ENCODE measurements at regions of chr18 and their contacts with region 1.

Region 1: GRCh38 chr18:23032030-23032582 is 99.0 kb downstream of the RBBP8 start:
- DNase-seq: peak; percentile 76
- H3K4me3 ChIP-seq: no peak overlapping the region
- H3K27ac ChIP-seq: peak overlapping the region; percentile 75
- H3K4me1 ChIP-seq: peaks cover 26% of the 10 kb centered on the region
- H3K27me3 ChIP-seq: no peaks in the 10 kb centered on the region
- CTCF ChIP-seq: no peak

Region 2: DNA sequence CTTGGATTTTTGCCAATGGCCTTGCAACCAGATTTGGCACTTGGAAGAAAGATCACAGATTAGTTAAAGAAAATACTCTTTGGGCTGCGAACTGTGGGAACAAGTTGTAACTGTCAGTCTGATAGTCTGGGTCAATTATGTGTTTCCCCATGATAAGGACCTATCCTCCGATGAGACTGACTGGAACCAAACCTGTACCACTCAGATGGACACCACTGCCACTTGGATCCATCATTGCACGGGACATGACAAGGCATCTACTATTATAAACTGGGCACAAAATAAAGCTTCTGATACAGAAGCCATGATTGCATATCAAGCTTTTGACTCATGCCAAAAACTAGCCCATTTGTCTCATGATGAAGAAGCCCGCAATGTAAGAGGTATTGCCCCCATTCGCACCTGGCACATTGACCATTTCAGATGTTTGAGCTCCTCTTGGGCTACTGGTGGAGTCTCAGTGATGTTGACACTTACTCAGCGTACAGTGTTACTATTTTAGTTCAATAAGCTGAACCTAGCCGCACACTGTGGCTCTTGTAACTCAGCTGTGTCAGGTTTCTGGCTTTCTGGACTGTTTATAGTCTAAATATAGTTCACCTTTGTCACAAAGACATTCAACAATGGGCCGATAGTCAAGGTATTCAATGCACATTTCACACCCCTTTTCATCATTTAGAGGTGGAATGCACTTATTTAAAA is 278.8 kb before region 1 on chr18:
- CTCF ChIA-PET with region 1: no interaction called
- dilution Hi-C with region 1: no loop called
- in situ Hi-C with region 1: no loop called
- intact Hi-C with region 1: no loop called
- DNase-seq: no peak
- H3K4me3 ChIP-seq: no peak overlapping the region
- H3K27ac ChIP-seq: no peak overlapping the region
- H3K4me1 ChIP-seq: no peaks in the 10 kb centered on the region
- H3K27me3 ChIP-seq: no peaks in the 10 kb centered on the region
- CTCF ChIP-seq: no peak

Region 3: DNA sequence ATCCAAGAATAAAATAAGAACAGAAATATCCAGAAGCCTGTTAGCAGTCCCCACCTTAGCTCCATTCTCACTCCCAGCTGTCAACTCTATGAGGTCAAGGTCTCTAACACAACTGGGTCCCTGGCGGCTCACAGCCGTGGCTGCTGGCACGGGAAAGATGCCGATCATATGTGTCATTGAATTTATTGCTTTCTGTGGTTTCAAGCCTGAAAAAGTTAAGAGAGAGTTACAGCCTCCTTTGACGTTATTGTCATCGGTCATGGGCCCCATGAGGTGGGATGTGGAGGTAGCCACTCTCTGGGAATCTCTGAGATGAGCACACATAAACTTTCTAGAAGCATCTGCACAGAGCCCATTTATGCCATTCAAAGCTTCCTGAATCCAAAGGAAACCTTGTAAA is 74.5 kb after region 1 on chr18:
- CTCF ChIA-PET with region 1: interaction called, 3 read pairs
- dilution Hi-C with region 1: no loop called
- in situ Hi-C with region 1: no loop called
- intact Hi-C with region 1: loop called (anchors 5 kb)
- DNase-seq: peak; percentile 96
- H3K4me3 ChIP-seq: no peak overlapping the region
- H3K27ac ChIP-seq: peak overlapping the region; percentile 95
- H3K4me1 ChIP-seq: peaks cover 33% of the 10 kb centered on the region
- H3K27me3 ChIP-seq: no peaks in the 10 kb centered on the region
- CTCF ChIP-seq: peak in 1 of 2 donors; percentile 28

Region 4: GRCh38 chr18:23122334-23123229 is 90.5 kb after region 1 on chr18:
- CTCF ChIA-PET with region 1: no interaction called
- dilution Hi-C with region 1: no loop called
- in situ Hi-C with region 1: no loop called
- intact Hi-C with region 1: no loop called
- DNase-seq: no peak
- H3K4me3 ChIP-seq: no peak overlapping the region
- H3K27ac ChIP-seq: no peak overlapping the region
- H3K4me1 ChIP-seq: no peaks in the 10 kb centered on the region
- H3K27me3 ChIP-seq: no peaks in the 10 kb centered on the region
- CTCF ChIP-seq: no peak

Region 5: GRCh38 chr18:23337599-23338444 is 305.7 kb after region 1 on chr18:
- CTCF ChIA-PET with region 1: no interaction called
- dilution Hi-C with region 1: no loop called
- in situ Hi-C with region 1: no loop called
- intact Hi-C with region 1: no loop called
- DNase-seq: peak; percentile 50
- H3K4me3 ChIP-seq: no peak overlapping the region
- H3K27ac ChIP-seq: no peak overlapping the region
- H3K4me1 ChIP-seq: no peaks in the 10 kb centered on the region
- H3K27me3 ChIP-seq: no peaks in the 10 kb centered on the region
- CTCF ChIP-seq: no peak

Region 6: DNA sequence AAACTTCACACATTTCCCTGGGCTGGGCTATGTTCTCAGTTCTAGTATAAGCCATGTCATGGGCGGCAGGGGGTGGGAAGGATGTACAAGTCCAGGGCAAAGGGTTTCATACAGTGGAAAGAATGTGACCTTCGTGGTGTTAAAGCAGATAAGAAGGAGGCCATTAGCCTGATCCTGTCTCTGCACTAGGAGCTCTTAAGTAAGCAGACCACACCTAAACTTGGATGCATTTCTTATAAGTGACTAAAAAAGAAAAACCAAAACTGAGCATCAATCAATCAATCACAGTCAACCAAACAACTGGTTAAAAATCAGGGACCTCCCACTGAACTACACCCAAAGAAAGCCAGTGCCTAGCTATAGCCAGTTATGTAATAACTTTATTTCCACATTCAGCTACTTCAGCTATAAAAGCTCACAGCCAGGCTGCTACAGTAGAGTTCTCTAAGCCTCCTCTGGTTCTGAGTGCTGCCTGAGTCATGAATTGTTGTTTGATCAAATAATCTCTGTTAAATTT is 374.2 kb after region 1 on chr18:
- CTCF ChIA-PET with region 1: interaction called, 11 read pairs
- dilution Hi-C with region 1: no loop called
- in situ Hi-C with region 1: loop called (anchors 5 to 25 kb)
- intact Hi-C with region 1: loop called (anchors 1 kb)
- DNase-seq: peak; percentile 9
- H3K4me3 ChIP-seq: no peak overlapping the region
- H3K27ac ChIP-seq: no peak overlapping the region
- H3K4me1 ChIP-seq: no peaks in the 10 kb centered on the region
- H3K27me3 ChIP-seq: no peaks in the 10 kb centered on the region
- CTCF ChIP-seq: no peak

Region 7: GRCh38 chr18:23416298-23416697 is 384.2 kb after region 1 on chr18:
- CTCF ChIA-PET with region 1: interaction called, 11 read pairs
- dilution Hi-C with region 1: no loop called
- in situ Hi-C with region 1: loop called (anchors 5 to 25 kb)
- intact Hi-C with region 1: loop called (anchors 1 kb)
- DNase-seq: no peak
- H3K4me3 ChIP-seq: no peak overlapping the region
- H3K27ac ChIP-seq: no peak overlapping the region
- H3K4me1 ChIP-seq: no peaks in the 10 kb centered on the region
- H3K27me3 ChIP-seq: no peaks in the 10 kb centered on the region
- CTCF ChIP-seq: no peak

Region 8: GRCh38 chr18:23422672-23423418 is 390.7 kb after region 1 on chr18:
- CTCF ChIA-PET with region 1: no interaction called
- dilution Hi-C with region 1: no loop called
- in situ Hi-C with region 1: loop called in 1 of 2 experiments (anchors 25 kb)
- intact Hi-C with region 1: no loop called
- DNase-seq: peak; percentile 82
- H3K4me3 ChIP-seq: no peak overlapping the region
- H3K27ac ChIP-seq: no peak overlapping the region
- H3K4me1 ChIP-seq: peaks cover 12% of the 10 kb centered on the region
- H3K27me3 ChIP-seq: no peaks in the 10 kb centered on the region
- CTCF ChIP-seq: no peak

Region 9: GRCh38 chr18:23503038-23503962 is 471.2 kb after region 1 on chr18 and contains the start of gene RMC1:
- CTCF ChIA-PET with region 1: no interaction called
- dilution Hi-C with region 1: no loop called
- in situ Hi-C with region 1: no loop called
- intact Hi-C with region 1: loop called (anchors 1 kb)
- DNase-seq: peak; percentile 90
- H3K4me3 ChIP-seq: peak within 1 kb of the TSS; percentile 75 to 87 (median 83)
- H3K27ac ChIP-seq: peak within 1 kb of the TSS; percentile 67
- H3K4me1 ChIP-seq: peaks cover 15% of the 10 kb centered on the region
- H3K27me3 ChIP-seq: no peaks in the 10 kb centered on the region
- CTCF ChIP-seq: peak in 1 of 2 donors; percentile 21
- total RNA-seq, gene RMC1: 29.8 to 33.3 TPM